HepG2 (cell line): ENCODE measurements at regions of chr3 and their contacts with region 1.

Region 1: DNA sequence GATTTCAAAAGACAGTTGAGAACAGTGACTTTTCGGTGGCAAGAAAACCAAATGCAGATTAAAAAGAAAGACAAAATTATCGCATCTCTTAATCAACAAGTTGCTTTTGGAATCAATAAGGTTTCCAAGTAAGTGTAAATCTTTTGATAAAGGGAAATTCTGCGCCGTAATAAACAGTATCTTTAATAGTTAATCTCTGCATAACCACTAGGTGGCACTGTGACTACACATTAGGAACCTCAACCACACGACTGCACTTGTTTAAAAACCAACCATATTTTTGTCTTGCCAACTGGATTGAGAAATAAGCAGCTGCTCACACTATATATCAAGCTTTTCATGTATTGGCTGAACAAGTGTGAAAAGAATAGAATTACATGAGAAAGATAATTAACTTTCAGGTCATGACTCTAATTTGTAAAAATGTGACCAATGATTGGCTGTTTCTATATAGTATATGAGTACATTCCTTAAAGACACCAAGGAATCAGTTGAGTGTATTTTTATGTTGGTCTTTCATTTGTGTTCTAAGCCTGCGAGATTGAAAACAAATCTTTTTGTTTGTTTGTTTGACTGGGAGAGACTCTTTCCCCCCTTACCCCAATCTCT is 72.7 kb downstream of the DZIP3 start:
- DNase-seq: peak; percentile 56
- ATAC-seq: peak; percentile 68
- H3K4me3 ChIP-seq: no peak overlapping the region
- H3K27ac ChIP-seq: no peak overlapping the region
- H3K4me1 ChIP-seq: no peaks in the 10 kb centered on the region
- H3K27me3 ChIP-seq: no peaks in the 10 kb centered on the region
- CTCF ChIP-seq: peak; percentile 72
- EP300 ChIP-seq: no peak
- POLR2A ChIP-seq: no peak
- RAD21 ChIP-seq: peak; percentile 54; the same call in 1 of the 2 replicates

Region 2: GRCh38 chr3:108677811-108678210 is 15.6 kb after region 1 on chr3:
- CTCF ChIA-PET with region 1: no interaction called
- POLR2A ChIA-PET with region 1: no interaction called
- in situ Hi-C with region 1: no loop called
- intact Hi-C with region 1: no loop called
- DNase-seq: no peak
- ATAC-seq: no peak
- H3K4me3 ChIP-seq: no peak overlapping the region
- H3K27ac ChIP-seq: no peak overlapping the region
- H3K4me1 ChIP-seq: no peaks in the 10 kb centered on the region
- H3K27me3 ChIP-seq: no peaks in the 10 kb centered on the region
- CTCF ChIP-seq: no peak
- EP300 ChIP-seq: no peak
- POLR2A ChIP-seq: no peak
- RAD21 ChIP-seq: no peak

Region 3: DNA sequence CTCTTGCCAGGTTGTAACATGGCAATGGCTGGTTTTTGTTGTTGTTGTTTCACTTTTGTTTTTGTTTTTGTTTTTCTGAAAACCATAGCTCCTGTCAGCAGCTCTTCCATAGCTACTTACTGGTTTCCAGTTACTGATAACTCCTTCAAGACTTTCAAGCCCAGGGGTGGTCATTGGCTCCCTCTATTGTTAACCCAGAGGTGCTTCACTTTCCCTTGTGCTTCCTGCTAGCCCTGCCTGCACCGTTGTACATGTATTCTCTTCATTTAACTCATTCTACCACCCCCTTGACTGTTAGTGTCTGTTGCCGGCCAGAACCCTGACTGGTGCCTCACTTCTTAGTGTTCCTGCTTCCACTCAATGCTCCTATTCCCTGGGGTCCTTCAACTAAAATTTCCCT is 156.2 kb after region 1 on chr3:
- CTCF ChIA-PET with region 1: no interaction called
- POLR2A ChIA-PET with region 1: no interaction called
- in situ Hi-C with region 1: no loop called
- intact Hi-C with region 1: loop called (anchors 5 kb)
- DNase-seq: peak; percentile 3
- ATAC-seq: peak; percentile 64
- H3K4me3 ChIP-seq: no peak overlapping the region
- H3K27ac ChIP-seq: no peak overlapping the region
- H3K4me1 ChIP-seq: no peaks in the 10 kb centered on the region
- H3K27me3 ChIP-seq: no peaks in the 10 kb centered on the region
- CTCF ChIP-seq: peak; percentile 32; the same call in 1 of the 2 replicates
- EP300 ChIP-seq: no peak
- POLR2A ChIP-seq: no peak
- RAD21 ChIP-seq: no peak

Region 4: DNA sequence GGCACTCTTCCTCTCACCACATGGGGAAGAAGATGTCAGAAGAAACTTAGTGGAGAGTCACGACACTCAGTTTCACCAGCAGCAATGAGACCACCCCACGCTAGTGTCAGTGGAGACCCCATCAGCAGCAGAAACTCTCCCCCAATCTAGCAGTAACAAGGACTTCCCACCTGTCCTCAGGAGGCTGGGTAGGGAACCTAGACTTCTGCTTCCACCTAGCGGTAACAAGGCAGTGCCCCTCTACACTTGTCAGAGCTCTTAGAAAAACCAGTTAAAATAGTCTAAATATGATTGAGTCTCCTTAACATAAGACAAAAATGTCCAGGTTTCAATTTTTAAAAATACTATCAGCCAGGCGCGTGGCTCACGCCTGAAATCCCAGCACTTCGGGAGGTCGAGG is 217.7 kb after region 1 on chr3:
- CTCF ChIA-PET with region 1: interaction called, 4 read pairs
- POLR2A ChIA-PET with region 1: no interaction called
- in situ Hi-C with region 1: loop called (anchors 10 kb)
- intact Hi-C with region 1: loop called (anchors 1 kb)
- DNase-seq: peak; percentile 19
- ATAC-seq: peak; percentile 92
- H3K4me3 ChIP-seq: no peak overlapping the region
- H3K27ac ChIP-seq: no peak overlapping the region
- H3K4me1 ChIP-seq: no peaks in the 10 kb centered on the region
- H3K27me3 ChIP-seq: no peaks in the 10 kb centered on the region
- CTCF ChIP-seq: peak; percentile 47
- EP300 ChIP-seq: no peak
- POLR2A ChIP-seq: no peak
- RAD21 ChIP-seq: 0 out of 2 replicates have a peak, but pooled peaks have one; percentile 12

Region 5: GRCh38 chr3:108914774-108915641 is 252.8 kb after region 1 on chr3:
- CTCF ChIA-PET with region 1: interaction called, 25 read pairs
- POLR2A ChIA-PET with region 1: no interaction called
- in situ Hi-C with region 1: no loop called
- intact Hi-C with region 1: loop called (anchors 1 kb)
- DNase-seq: peak; percentile 61
- ATAC-seq: peak; percentile 96
- H3K4me3 ChIP-seq: no peak overlapping the region
- H3K27ac ChIP-seq: no peak overlapping the region
- H3K4me1 ChIP-seq: no peaks in the 10 kb centered on the region
- H3K27me3 ChIP-seq: no peaks in the 10 kb centered on the region
- CTCF ChIP-seq: peak; percentile 90
- EP300 ChIP-seq: no peak
- POLR2A ChIP-seq: no peak
- RAD21 ChIP-seq: peak; percentile 41; the same call in 1 of the 2 replicates

Region 6: DNA sequence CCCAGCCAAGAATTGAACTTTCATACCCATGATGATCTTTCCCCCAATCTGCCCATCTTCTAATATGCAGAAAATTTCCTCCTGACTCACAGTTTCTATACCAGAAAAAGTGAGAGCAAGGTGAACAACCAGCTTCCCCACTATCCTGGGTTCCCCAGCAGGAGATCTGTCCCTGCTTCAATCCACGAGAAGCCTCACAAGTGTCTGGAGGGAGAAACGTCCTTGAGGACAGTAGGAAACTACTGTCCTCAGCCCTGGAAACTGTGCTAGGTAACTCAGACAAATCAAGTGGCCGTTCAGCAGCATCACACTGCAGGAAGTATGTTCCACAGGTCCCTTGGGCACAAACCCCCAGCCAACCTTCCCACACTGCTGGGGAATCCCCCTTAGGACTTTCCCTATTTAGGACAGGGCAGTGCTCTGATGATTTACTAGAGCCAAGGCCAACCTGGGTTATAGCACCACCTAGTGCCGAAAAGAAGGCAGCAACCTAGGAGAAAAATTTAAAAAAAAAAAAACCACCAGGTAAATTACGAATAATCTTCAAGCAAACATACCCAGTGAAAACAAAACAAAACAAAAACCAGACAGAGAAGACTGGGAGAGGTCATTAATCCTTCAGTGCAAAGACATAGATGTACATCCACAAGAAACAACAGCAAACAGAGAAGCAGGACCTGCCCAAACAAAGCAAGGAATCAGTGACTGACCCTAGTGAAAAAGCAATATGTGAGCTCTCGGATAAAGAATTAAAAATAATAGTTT is 419.7 kb after region 1 on chr3:
- CTCF ChIA-PET with region 1: no interaction called
- POLR2A ChIA-PET with region 1: no interaction called
- in situ Hi-C with region 1: no loop called
- intact Hi-C with region 1: loop called (anchors 1 kb)
- DNase-seq: peak; percentile 31
- ATAC-seq: peak; percentile 91
- H3K4me3 ChIP-seq: no peak overlapping the region
- H3K27ac ChIP-seq: no peak overlapping the region
- H3K4me1 ChIP-seq: no peaks in the 10 kb centered on the region
- H3K27me3 ChIP-seq: no peaks in the 10 kb centered on the region
- CTCF ChIP-seq: peak; percentile 71
- EP300 ChIP-seq: no peak
- POLR2A ChIP-seq: no peak
- RAD21 ChIP-seq: no peak